ENCODE measurements at regions of chr16 and their contacts with region 1.

Region 1: DNA sequence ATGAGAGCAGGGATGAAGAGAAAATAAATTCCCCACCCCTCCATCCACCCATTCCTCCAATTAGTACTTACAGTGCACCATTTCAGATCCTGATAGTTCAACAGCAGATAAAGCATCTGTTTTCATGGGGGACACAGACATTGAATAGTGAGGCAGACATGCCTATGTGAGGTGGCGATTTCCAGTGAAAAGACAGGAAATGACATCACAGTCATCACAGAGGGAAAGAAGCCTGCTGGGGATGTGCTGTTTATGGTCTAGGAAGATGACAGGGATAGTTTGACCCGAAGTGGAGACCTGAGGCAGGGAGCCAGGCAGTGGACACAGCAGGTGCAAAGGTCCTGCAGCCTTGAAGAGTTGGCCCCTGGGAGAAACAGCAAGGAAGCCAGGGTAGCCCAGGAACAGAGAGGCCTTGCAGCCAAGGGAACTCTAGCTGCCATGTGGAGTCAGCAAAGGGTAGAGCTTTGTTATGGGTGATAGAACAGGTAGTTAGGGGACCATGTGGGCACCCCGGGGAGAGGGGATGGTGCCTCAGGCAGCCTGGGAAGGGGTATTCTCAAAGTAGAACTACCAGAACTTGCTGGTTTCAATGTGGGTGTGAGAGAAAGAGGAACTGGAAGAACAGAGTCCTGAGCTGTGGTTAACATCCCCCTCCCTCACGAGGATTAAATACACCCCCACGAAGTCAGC is 256.6 kb downstream of the CPPED1 start:
- DNase-seq: peak; percentile 89
- ATAC-seq: peak; percentile 68
- H3K4me3 ChIP-seq: peak overlapping the region; percentile 47
- H3K27ac ChIP-seq: peak overlapping the region; percentile 89
- H3K4me1 ChIP-seq: peaks cover 72% of the 10 kb centered on the region
- H3K27me3 ChIP-seq: no peaks in the 10 kb centered on the region
- CTCF ChIP-seq: no peak
- EP300 ChIP-seq: peak; percentile 92 to 95
- POLR2A ChIP-seq: no peak
- RAD21 ChIP-seq: no peak

Region 2: GRCh38 chr16:12455287-12455798 is 91.7 kb before region 1 on chr16:
- CTCF ChIA-PET with region 1: interaction called, 10 read pairs
- POLR2A ChIA-PET with region 1: no interaction called
- RAD21 ChIA-PET with region 1: interaction called, 5 read pairs
- SMC1A ChIA-PET with region 1: interaction called, 11 read pairs
- in situ Hi-C with region 1: no loop called
- intact Hi-C with region 1: no loop called
- DNase-seq: no peak
- ATAC-seq: peak; percentile 90
- H3K4me3 ChIP-seq: no peak overlapping the region
- H3K27ac ChIP-seq: no peak overlapping the region
- H3K4me1 ChIP-seq: peaks cover 14% of the 10 kb centered on the region
- H3K27me3 ChIP-seq: no peaks in the 10 kb centered on the region
- CTCF ChIP-seq: peak; percentile 72 to 88 (median 83)
- EP300 ChIP-seq: no peak
- POLR2A ChIP-seq: no peak
- RAD21 ChIP-seq: peak; percentile 75

Region 3: DNA sequence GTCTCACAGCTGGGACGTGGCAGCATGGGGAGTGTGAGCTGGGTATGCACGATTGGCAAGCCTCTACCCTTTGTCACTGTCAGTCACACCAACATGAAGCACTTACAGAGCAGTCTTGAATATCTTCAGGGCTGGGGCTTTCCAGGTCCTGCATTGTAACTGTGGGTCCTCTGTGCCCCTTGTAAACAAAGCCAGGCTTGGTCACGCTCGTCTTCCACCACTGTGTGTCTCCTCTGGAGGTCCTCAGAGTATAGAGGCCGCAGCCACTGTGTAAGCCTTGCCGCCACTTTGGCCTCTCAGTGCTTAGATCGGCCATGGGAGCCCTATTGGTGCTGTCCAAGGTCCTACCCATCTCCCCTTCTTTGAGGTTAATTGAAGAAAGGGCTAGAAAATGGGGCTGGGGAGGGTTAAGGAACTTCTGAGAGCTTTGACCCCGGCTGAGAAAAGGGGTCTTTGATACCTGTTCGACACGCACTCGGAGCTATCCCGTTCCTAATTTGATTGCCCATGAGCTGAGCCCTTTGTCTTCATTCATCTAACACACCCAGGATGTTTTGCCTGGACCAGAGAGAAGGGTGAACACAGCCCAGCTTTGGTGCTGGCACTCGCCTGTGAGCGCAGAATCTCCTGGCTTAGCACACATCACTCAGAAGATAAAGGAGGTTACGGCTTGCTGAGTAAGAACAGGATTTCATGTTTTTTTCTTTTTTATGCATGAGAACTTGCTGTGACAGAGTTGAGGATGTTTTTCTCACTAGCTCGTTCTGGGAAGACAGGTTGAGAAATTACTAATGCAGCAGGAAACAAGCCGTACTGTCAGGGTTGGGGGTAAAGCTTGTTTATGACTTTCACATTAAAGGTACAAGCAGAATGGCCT is 11.3 kb before region 1 on chr16:
- CTCF ChIA-PET with region 1: interaction called, 79 read pairs
- POLR2A ChIA-PET with region 1: interaction called, 83 read pairs
- RAD21 ChIA-PET with region 1: interaction called, 209 read pairs
- SMC1A ChIA-PET with region 1: interaction called, 201 read pairs
- in situ Hi-C with region 1: no loop called
- intact Hi-C with region 1: loop called (anchors 1 kb)
- DNase-seq: peak; percentile 97
- ATAC-seq: peak; percentile 79
- H3K4me3 ChIP-seq: 0 out of 2 replicates have a peak overlapping the region, but pooled peaks have one; percentile 14
- H3K27ac ChIP-seq: peak overlapping the region; percentile 77
- H3K4me1 ChIP-seq: peaks cover 57% of the 10 kb centered on the region
- H3K27me3 ChIP-seq: no peaks in the 10 kb centered on the region
- CTCF ChIP-seq: peak in 2 of 3 experiments; percentile 24 to 49; a peak in 3 of 6 replicates
- EP300 ChIP-seq: peak; percentile 79 to 83
- POLR2A ChIP-seq: peak; percentile 68
- RAD21 ChIP-seq: peak; percentile 48

Region 4: GRCh38 chr16:12613131-12613991 is 66.3 kb after region 1 on chr16:
- CTCF ChIA-PET with region 1: interaction called, 3 read pairs
- POLR2A ChIA-PET with region 1: interaction called, 3 read pairs
- RAD21 ChIA-PET with region 1: interaction called, 8 read pairs
- SMC1A ChIA-PET with region 1: interaction called, 20 read pairs
- in situ Hi-C with region 1: no loop called
- intact Hi-C with region 1: no loop called
- DNase-seq: peak; percentile 76
- ATAC-seq: peak; percentile 88
- H3K4me3 ChIP-seq: no peak overlapping the region
- H3K27ac ChIP-seq: no peak overlapping the region
- H3K4me1 ChIP-seq: peaks cover 17% of the 10 kb centered on the region
- H3K27me3 ChIP-seq: no peaks in the 10 kb centered on the region
- CTCF ChIP-seq: no peak
- EP300 ChIP-seq: peak; percentile 64 to 90; a peak in 3 of 4 replicates
- POLR2A ChIP-seq: no peak
- RAD21 ChIP-seq: no peak

Region 5: GRCh38 chr16:12646490-12647274 is 99.6 kb after region 1 on chr16:
- CTCF ChIA-PET with region 1: no interaction called
- POLR2A ChIA-PET with region 1: interaction called, 4 read pairs
- RAD21 ChIA-PET with region 1: interaction called, 4 read pairs
- SMC1A ChIA-PET with region 1: interaction called, 9 read pairs
- in situ Hi-C with region 1: no loop called
- intact Hi-C with region 1: loop called (anchors 5 kb)
- DNase-seq: peak; percentile 70
- ATAC-seq: peak; percentile 71
- H3K4me3 ChIP-seq: no peak overlapping the region
- H3K27ac ChIP-seq: 0 out of 2 replicates have a peak overlapping the region, but pooled peaks have one; percentile 2
- H3K4me1 ChIP-seq: no peaks in the 10 kb centered on the region
- H3K27me3 ChIP-seq: no peaks in the 10 kb centered on the region
- CTCF ChIP-seq: no peak
- EP300 ChIP-seq: no peak
- POLR2A ChIP-seq: no peak
- RAD21 ChIP-seq: no peak

Region 6: DNA sequence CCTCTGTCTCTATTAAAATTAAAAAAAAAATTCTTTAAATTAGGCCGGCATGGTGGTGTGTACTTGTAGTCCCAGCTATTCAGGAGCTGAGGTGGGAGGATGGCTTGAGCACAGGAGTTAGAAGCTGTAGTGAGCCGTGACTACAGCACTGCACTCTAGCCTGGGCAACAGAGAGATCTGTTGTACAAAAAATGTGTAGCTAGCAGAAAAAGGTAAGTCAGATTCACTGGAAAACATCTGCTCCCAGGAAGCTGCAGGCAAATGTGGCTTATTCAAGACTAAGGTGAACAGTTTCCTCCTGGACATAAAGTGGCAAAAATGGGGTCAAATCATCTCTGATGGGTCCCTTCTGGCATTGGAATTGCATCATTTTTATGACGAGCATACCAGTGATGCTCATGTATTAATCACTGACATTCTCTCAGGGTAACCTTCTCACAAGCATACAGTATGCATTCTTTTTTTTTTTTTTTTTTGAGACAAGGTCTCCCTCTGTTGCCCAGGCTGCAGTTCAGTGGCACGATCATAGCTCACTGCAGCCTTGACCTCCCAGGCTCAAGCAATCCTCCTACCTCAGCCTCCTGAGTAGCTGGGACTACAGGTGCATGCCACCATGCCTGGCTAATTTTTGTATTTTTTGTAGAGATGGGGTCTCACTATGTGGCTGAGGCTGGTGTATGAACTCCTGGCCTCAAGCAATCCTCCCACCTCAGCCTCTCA is 207.9 kb after region 1 on chr16:
- CTCF ChIA-PET with region 1: no interaction called
- POLR2A ChIA-PET with region 1: no interaction called
- RAD21 ChIA-PET with region 1: interaction called, 5 read pairs
- SMC1A ChIA-PET with region 1: interaction called, 9 read pairs
- in situ Hi-C with region 1: no loop called
- intact Hi-C with region 1: loop called (anchors 1 kb)
- DNase-seq: no peak
- ATAC-seq: no peak
- H3K4me3 ChIP-seq: no peak overlapping the region
- H3K27ac ChIP-seq: no peak overlapping the region
- H3K4me1 ChIP-seq: peaks cover 14% of the 10 kb centered on the region
- H3K27me3 ChIP-seq: no peaks in the 10 kb centered on the region
- CTCF ChIP-seq: no peak
- EP300 ChIP-seq: no peak
- POLR2A ChIP-seq: no peak
- RAD21 ChIP-seq: no peak

Region 7: GRCh38 chr16:12803203-12804097 is 256.4 kb after region 1 on chr16 and contains the start of gene CPPED1:
- CTCF ChIA-PET with region 1: no interaction called
- POLR2A ChIA-PET with region 1: no interaction called
- RAD21 ChIA-PET with region 1: interaction called, 11 read pairs
- SMC1A ChIA-PET with region 1: interaction called, 3 read pairs
- in situ Hi-C with region 1: loop called (anchors 5 kb)
- intact Hi-C with region 1: no loop called
- DNase-seq: peak; percentile 72
- ATAC-seq: peak; percentile 89
- H3K4me3 ChIP-seq: peak within 1 kb of the TSS; percentile 88
- H3K27ac ChIP-seq: peak within 1 kb of the TSS; percentile 81
- H3K4me1 ChIP-seq: peaks cover 22% of the 10 kb centered on the region
- H3K27me3 ChIP-seq: no peaks in the 10 kb centered on the region
- CTCF ChIP-seq: no peak; a peak in 1 of 6 replicates
- EP300 ChIP-seq: peak in 1 of 2 experiments; percentile 24; a peak in 1 of 4 replicates
- POLR2A ChIP-seq: peak; percentile 97
- RAD21 ChIP-seq: no peak
- polyA plus RNA-seq, gene CPPED1: 11.4 to 12.3 TPM